Activated CD8-positive, alpha-beta T cell treated with anti-CD3 and anti-CD28 coated beads, Interleukin-2, amount 10 ng/mL, durations not matched to agents 7 days and 5 days (primary cell): ENCODE measurements at regions of chr6 and their contacts with region 1.

Region 1: DNA sequence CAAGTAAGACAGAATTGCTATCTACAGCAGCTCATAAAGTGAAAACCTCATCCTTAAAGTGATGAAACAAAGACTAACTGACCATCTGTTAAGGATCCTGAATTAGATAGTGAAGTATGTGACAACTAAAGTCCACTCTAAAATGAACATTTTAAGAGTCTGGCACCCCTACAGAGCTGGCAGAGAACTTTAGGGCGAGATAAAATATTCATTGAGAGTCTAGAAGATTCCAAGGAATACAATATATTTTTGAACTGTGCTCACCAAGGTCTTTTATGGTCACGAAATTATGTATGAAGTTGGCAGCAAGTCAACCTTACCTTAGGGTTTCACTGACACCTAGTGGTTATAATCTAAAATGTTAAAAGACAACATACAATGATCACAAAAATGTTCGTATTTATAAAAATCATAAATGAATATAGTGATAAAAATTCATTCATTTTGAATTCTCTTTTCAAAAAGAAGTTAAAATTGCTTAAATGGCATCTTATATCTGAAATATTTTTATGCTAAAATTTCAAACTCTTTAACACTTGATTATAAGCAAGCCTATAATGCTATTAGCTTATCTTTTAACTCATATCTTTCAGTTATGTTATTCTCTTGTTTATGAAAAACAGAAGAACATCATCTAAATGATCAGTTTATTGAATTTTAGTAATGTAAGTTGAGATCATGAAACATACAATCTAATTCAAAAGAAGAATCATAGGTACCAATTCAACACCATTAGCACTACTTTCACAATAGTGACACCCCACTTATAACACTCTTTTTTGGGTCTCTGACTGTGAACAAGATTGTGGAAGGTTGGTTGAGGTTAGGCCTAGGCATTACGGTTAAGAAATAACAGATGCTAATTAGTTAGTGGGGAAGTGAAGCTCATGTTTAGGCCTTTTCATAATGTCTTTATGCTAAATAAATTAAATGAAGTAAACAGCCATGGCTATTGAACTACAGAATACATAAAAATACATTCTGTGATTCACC is 27.5 kb downstream of the RSPH3 start:
- DNase-seq: no peak
- ATAC-seq: peak; percentile 64
- H3K4me3 Mint-ChIP-seq: no peak overlapping the region
- H3K27ac Mint-ChIP-seq: no peak overlapping the region
- H3K4me1 Mint-ChIP-seq: no peaks in the 10 kb centered on the region
- H3K27me3 Mint-ChIP-seq: peaks cover 2% of the 10 kb centered on the region

Region 2: GRCh38 chr6:158660333-158660754 is 312.2 kb before region 1 on chr6:
- CTCF ChIA-PET with region 1: interaction called, 13 read pairs
- POLR2A ChIA-PET with region 1: no interaction called
- DNase-seq: peak; percentile 66
- ATAC-seq: peak; percentile 69
- H3K4me3 Mint-ChIP-seq: no peak overlapping the region
- H3K27ac Mint-ChIP-seq: peak overlapping the region; percentile 60
- H3K4me1 Mint-ChIP-seq: peaks cover 62% of the 10 kb centered on the region
- H3K27me3 Mint-ChIP-seq: no peaks in the 10 kb centered on the region

Region 3: DNA sequence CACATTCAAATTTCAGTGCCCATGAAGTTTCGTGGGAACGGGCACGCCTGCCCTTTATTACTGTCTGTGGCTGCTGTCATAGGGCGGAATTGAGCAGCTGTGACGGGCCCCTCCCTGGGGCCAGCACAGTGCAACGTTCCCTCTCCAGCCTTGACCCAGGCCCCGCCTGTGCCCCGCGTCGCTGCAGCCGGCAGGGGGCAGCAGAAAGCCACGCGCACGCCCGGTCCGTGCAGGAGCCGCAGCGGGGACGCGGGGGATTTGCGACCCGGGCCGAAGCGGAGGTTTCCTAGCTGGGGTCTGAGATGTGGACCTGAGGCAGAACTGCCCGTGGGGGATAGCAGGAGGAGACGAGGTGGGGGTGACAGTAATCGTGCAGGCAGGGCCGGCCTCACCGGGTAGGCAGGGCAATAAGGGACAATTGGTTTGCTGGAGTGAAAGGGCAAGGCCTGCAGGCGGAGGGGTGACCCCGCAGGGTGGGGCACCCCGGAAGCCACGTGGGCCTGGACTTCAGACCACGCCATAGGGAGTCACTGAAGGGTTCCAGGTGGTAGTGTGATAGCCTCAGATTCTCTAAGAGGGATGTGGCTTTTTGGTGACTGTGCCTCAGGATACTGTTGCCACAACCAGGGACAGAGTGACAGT is 268.2 kb before region 1 on chr6:
- CTCF ChIA-PET with region 1: interaction called, 50 read pairs
- POLR2A ChIA-PET with region 1: no interaction called
- DNase-seq: peak; percentile 79
- ATAC-seq: peak; percentile 98
- H3K4me3 Mint-ChIP-seq: peak overlapping the region; percentile 60
- H3K27ac Mint-ChIP-seq: peak overlapping the region; percentile 82
- H3K4me1 Mint-ChIP-seq: peaks cover 32% of the 10 kb centered on the region
- H3K27me3 Mint-ChIP-seq: no peaks in the 10 kb centered on the region

Region 4: DNA sequence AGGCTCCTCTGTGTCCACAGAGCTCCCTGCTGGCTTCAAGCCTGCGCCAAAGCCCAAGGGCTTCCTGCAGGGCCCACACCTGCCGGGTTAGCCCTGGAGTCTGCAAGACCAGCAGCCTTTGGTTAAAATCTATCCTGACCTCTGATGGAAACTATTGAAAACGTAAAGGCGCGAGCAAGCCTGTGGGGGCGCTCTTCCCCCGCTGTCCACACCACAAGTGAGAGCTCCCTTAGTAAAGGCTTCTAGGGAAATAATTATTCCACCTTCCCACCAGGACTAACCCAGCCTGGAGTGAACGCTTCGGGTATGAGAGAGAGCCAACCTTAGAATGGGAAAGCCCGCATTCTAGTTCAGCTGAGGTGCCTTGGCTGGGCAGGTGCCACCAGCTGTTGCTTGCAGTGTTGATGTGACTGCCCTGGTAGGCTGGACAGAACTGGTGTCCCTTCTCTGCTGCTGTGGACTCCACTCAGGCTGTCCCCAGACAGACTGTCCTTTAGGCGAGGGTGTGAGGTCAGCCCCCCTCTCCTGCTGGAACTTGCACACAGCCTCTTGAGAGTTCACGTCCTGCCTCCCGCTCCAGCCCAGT is 254.0 kb before region 1 on chr6:
- CTCF ChIA-PET with region 1: interaction called, 13 read pairs
- POLR2A ChIA-PET with region 1: no interaction called
- DNase-seq: no peak
- ATAC-seq: no peak
- H3K4me3 Mint-ChIP-seq: no peak overlapping the region
- H3K27ac Mint-ChIP-seq: peak overlapping the region; percentile 94
- H3K4me1 Mint-ChIP-seq: peaks cover 72% of the 10 kb centered on the region
- H3K27me3 Mint-ChIP-seq: no peaks in the 10 kb centered on the region

Region 5: GRCh38 chr6:158793432-158793831 is 179.1 kb before region 1 on chr6:
- CTCF ChIA-PET with region 1: interaction called, 76 read pairs
- POLR2A ChIA-PET with region 1: no interaction called
- DNase-seq: no peak
- ATAC-seq: no peak
- H3K4me3 Mint-ChIP-seq: no peak overlapping the region
- H3K27ac Mint-ChIP-seq: no peak overlapping the region
- H3K4me1 Mint-ChIP-seq: peaks cover 82% of the 10 kb centered on the region
- H3K27me3 Mint-ChIP-seq: no peaks in the 10 kb centered on the region

Region 6: DNA sequence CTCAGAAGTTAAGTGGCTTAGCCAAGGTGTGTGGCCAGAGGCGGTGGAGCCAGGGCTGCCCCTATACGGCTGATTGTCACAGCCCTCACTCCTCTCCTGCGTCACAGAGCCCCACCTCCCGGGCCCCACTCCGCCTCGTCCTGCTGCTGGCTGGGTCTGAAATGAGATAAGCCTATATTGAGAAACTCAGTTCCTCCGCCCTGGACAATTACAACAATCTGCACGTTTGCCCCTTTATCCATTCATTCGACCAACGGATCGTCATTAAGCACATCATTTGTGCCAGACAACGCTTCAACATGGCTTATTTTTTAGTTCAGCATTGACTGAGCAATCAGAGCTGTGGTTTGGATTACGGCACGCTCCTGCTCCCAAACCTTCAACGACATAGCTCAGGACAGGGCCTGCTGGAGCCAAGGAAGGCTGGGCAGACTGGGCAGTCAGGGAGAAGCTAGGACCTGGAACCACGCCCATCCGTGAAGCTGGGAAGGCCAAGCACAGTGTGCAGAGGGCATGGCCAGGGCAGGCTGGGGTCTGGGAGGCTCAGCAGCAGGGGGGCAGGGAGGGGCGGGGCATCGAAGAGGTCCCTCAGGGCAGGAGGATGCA is 136.8 kb before region 1 on chr6:
- CTCF ChIA-PET with region 1: no interaction called
- POLR2A ChIA-PET with region 1: no interaction called
- DNase-seq: no peak
- ATAC-seq: no peak
- H3K4me3 Mint-ChIP-seq: no peak overlapping the region
- H3K27ac Mint-ChIP-seq: no peak overlapping the region
- H3K4me1 Mint-ChIP-seq: peaks cover 6% of the 10 kb centered on the region
- H3K27me3 Mint-ChIP-seq: peaks cover 9% of the 10 kb centered on the region

Region 7: GRCh38 chr6:158962371-158962770 is 10.2 kb before region 1 on chr6:
- CTCF ChIA-PET with region 1: interaction called, 18 read pairs
- POLR2A ChIA-PET with region 1: no interaction called
- DNase-seq: no peak
- ATAC-seq: no peak
- H3K4me3 Mint-ChIP-seq: no peak overlapping the region
- H3K27ac Mint-ChIP-seq: no peak overlapping the region
- H3K4me1 Mint-ChIP-seq: no peaks in the 10 kb centered on the region
- H3K27me3 Mint-ChIP-seq: peaks cover 13% of the 10 kb centered on the region